ENCODE measurements at regions of chr20 and their contacts with region 1.

Region 1: DNA sequence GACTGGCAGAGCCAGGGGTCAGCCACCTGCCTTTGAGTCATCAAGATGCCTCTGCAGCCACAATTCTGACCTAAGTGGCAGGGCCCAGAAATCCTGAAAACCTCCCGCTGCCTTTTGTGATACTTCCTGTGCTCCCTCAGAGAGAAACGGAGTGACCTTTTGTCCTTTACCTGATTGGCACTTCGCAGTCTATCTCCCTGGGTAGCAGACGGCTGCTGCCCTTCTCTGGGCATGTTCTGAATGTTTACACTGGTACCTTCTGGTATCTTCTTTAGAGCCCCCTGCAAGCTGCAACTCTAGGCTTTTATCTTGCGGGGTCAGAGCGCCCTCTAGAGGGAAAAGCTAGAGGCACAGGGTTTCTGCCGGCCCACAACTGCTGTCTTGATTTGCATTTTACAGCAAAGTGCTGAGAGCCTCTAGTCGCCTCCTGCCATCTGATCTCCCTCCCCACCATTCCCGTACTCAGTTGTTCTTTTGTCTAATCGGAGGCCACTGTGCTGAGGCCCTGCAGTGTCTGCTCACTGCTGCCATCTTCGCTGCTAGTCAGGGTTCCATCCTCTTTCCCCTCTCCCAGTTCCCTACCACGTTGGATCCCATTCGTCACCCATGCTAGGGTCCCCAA is 26.9 kb downstream of the SPATA2 start:
- DNase-seq: peak; percentile 89
- ATAC-seq: peak; percentile 83
- H3K4me3 Mint-ChIP-seq: no peak overlapping the region
- H3K27ac Mint-ChIP-seq: peak overlapping the region; percentile 90
- H3K4me1 Mint-ChIP-seq: peaks cover 37% of the 10 kb centered on the region
- H3K27me3 Mint-ChIP-seq: no peaks in the 10 kb centered on the region
- CTCF ChIP-seq: peak; percentile 84

Region 2: DNA sequence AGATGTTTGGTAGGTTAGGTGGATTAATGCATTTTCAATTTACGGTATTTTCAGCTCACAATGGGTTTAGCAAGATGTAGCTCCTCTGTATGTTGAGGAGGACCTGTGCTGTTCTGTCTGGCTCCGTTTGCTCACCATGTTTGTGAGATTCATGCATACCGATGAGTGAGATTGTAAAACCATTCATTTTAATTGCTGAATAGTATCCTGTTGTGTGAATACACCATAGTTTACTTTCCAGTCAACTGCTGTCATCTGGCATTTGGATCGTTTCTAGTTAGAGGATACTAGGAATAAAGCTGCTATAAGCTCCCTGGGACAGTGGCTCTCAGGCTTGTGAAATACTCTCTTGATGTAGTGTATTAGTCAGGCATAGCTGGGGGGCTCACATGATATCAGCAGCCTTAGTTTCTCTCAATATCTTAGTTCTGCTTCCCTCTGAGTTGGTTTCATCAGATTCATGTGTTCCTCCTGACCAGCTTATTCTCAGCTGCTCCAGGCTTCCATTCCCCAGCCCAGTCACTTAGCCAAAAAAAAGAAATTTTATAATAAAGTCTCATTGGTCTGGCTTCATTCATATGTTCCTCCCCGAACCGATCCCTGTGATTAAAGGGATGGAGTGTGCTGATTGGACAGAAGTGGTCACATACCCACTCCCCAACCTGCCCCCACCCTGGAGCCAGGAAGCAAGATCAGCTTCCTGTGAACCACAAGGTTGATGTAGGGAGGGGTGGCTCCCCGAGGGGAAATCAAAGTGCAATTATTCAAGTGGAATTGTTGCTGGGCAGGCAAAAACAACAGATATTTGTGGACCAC is 163.8 kb before region 1 on chr20:
- CTCF ChIA-PET with region 1: no interaction called
- POLR2A ChIA-PET with region 1: no interaction called
- DNase-seq: no peak
- ATAC-seq: peak; percentile 93
- H3K4me3 Mint-ChIP-seq: no peak overlapping the region
- H3K27ac Mint-ChIP-seq: 0 out of 2 replicates have a peak overlapping the region, but pooled peaks have one; percentile 57
- H3K4me1 Mint-ChIP-seq: peaks cover 15% of the 10 kb centered on the region
- H3K27me3 Mint-ChIP-seq: no peaks in the 10 kb centered on the region
- CTCF ChIP-seq: no peak

Region 3: DNA sequence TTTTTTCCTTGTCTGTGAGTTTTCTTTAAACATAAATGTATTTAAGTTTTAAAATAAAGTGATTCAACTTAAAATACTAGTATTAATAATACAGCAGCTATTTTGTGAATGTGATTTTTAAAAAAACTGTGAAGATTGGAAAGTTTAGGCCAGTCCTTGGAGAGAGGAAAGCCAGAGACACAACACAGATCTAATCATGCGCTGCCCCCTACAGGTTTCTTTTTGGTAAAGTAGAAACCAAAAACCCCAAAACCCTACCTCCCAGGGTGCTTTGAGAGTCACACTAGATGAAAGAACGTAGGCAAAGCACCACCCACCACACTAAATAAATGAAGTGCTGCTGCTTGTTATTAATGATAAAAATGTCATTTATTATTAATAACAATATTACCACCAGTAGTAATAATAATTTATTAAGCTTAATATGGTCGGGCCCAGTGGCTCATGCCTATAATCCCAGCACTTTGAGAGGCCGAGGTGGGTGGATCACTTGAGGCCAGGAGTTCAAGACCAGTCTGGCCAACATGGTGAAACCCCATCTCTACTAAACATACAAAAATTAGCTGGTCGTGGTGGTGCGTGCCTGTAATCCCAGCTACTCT is 42.1 kb before region 1 on chr20:
- CTCF ChIA-PET with region 1: interaction called, 22 read pairs
- POLR2A ChIA-PET with region 1: no interaction called
- DNase-seq: peak; percentile 39
- ATAC-seq: peak; percentile 84
- H3K4me3 Mint-ChIP-seq: no peak overlapping the region
- H3K27ac Mint-ChIP-seq: no peak overlapping the region
- H3K4me1 Mint-ChIP-seq: peaks cover 35% of the 10 kb centered on the region
- H3K27me3 Mint-ChIP-seq: no peaks in the 10 kb centered on the region
- CTCF ChIP-seq: peak; percentile 26; the same call in 1 of the 2 replicates

Region 4: DNA sequence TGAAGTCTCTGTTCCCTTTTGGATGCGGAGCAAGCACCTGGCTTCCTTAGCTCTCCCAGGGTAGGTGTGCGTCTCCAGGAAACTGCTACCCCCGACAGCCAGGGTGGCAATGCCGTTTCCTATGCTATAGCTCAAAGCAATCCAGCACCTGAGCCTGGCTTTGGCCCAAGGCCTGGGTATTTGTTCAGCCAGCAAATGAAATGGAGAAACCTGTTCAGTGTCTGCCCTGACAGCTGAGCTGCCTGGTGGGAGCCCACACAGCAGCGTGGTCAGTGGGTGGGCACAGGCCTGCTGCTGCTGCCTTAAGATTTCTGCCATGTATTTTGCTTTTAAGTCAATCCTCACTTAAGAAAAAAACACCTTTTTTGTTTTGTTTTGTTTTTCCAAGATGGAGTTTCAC is 13.1 kb after region 1 on chr20:
- CTCF ChIA-PET with region 1: interaction called, 16 read pairs
- POLR2A ChIA-PET with region 1: interaction called, 3 read pairs
- DNase-seq: no peak
- ATAC-seq: no peak
- H3K4me3 Mint-ChIP-seq: no peak overlapping the region
- H3K27ac Mint-ChIP-seq: no peak overlapping the region
- H3K4me1 Mint-ChIP-seq: no peaks in the 10 kb centered on the region
- H3K27me3 Mint-ChIP-seq: 0 out of 2 replicates have a peak, but pooled peaks cover 3% of the 10 kb centered on the region
- CTCF ChIP-seq: no peak

Region 5: DNA sequence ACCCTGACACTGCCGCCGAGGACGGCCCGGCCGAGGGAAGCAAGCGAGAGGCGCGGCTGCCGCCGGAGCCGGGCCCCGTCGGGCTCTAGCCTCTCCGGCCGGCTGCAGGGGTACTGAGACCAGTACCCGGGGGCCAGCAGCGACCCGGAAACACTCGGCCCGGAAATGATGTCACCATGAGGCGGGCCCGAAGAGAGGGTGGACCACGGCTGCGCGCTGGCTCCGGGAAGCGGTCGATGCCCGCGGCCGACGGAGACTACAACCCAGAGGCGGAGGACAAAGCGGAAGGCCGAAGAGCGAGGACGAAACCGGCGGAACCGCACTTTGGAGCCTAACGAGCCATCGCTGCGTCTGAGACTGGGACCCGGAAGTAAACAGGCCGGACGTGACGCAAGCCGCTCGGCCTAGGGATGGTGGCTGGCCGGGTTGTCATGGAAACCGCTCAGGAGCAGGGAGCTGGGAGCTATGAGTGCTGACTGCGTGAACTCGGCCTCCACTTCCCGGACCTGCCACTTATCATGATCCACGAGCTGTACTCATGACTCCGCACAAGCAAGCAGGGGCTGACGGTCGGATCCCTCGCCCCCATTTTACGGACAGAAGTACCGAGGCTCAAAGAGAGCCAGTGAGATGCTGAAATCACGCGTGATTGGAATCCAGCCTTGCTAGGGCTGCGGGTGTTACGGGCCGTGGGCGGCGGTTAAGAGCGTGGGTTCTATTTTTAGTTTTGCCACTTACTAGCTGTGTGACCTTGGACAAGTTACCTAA is 27.1 kb after region 1 on chr20 and contains the start of gene SPATA2:
- CTCF ChIA-PET with region 1: interaction called, 10 read pairs
- POLR2A ChIA-PET with region 1: no interaction called
- DNase-seq: peak; percentile 93
- ATAC-seq: peak; percentile 86
- H3K4me3 Mint-ChIP-seq: peak within 1 kb of the TSS; percentile 98
- H3K27ac Mint-ChIP-seq: peak within 1 kb of the TSS; percentile 100
- H3K4me1 Mint-ChIP-seq: peaks cover 19% of the 10 kb centered on the region
- H3K27me3 Mint-ChIP-seq: peaks cover 6% of the 10 kb centered on the region; the same call in 1 of the 2 replicates
- CTCF ChIP-seq: no peak
- total RNA-seq, gene SPATA2: 10.1 to 11.3 TPM (median 11.3 TPM) in 3 replicates

Region 6: DNA sequence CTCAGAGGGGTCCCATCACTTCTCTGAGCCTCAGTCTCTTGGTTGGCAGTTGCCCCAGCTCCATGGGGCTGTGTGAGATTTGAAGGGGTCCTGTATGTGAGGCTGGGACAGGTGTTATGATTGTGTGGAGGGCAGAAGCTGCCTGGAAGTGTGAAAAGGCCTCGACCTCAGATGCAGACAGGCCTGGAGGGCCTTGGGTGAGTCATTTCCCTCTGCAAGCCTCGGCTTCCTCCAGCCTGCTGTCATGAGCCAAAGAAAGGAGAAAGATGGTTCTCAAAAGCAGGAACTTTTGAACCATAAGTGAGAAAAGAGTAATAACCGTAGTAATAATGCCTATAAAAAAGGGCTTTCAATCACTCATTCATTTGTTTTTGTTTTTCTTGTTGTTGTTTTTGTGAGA is 131.8 kb after region 1 on chr20:
- CTCF ChIA-PET with region 1: no interaction called
- POLR2A ChIA-PET with region 1: no interaction called
- DNase-seq: no peak
- ATAC-seq: no peak
- H3K4me3 Mint-ChIP-seq: no peak overlapping the region
- H3K27ac Mint-ChIP-seq: no peak overlapping the region
- H3K4me1 Mint-ChIP-seq: peaks cover 11% of the 10 kb centered on the region
- H3K27me3 Mint-ChIP-seq: no peaks in the 10 kb centered on the region
- CTCF ChIP-seq: no peak

Measured in WTC11 (cell line).